BJ (cell line): ENCODE measurements at regions of chr10 and their contacts with region 1.

Region 1: GRCh38 chr10:44071479-44071878 is 313.4 kb downstream of the CXCL12 start:
- DNase-seq: peak; percentile 89
- H3K4me3 ChIP-seq: no peak overlapping the region
- H3K27me3 ChIP-seq: no peaks in the 10 kb centered on the region
- CTCF ChIP-seq: peak; percentile 39

Region 2: GRCh38 chr10:44089671-44090070 is 18.2 kb after region 1 on chr10:
- CTCF ChIA-PET with region 1: no interaction called
- POLR2A ChIA-PET with region 1: no interaction called
- DNase-seq: no peak
- H3K4me3 ChIP-seq: no peak overlapping the region
- H3K27me3 ChIP-seq: no peaks in the 10 kb centered on the region
- CTCF ChIP-seq: no peak

Region 3: DNA sequence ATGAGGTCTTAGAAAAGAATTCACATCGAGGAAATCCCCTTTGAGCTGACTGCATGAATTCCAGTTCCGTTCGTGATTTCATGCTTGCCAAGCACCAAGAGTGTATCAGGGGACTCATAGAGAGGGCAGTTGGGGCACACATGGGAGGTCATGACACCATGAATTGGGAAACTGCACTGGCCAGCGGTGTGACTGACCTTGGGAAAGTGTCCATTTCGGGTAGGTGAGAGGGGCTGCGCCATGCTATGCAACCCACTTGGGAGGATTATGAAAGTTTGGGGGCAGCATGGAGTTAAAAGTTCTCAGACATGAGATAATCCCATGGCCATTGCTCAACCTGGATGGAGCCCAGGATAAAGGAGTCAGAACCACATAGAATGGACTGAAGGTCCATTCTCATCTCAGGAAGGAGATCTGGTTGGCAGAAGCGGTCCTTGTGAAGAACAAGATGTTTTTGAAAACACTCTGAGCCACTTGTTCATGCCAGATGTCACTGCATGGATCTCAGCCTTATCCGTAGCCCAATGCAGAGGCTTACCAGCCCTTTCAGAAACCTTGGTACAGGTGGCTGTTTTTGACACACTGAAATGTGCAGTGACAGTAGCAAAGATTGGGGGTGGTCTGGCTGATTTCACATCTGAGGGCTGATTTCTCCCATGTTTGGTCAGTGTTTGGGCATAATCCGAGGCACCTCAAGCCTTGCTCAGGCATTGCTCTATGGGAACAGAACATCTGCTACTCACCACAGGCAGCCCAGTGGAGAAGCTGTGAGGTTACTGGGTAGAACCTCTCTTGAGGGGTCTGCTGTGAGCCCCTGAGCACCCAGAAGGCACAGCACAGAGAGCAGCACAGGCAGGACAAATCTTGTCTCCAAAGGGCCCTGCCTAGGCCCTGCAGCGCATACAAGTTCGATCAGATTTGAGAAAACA is 61.1 kb after region 1 on chr10:
- CTCF ChIA-PET with region 1: no interaction called
- POLR2A ChIA-PET with region 1: no interaction called
- DNase-seq: no peak
- H3K4me3 ChIP-seq: no peak overlapping the region
- H3K27me3 ChIP-seq: peaks cover 3% of the 10 kb centered on the region; the same call in 1 of the 2 replicates
- CTCF ChIP-seq: no peak

Region 4: GRCh38 chr10:44300666-44301649 is 229.5 kb after region 1 on chr10:
- CTCF ChIA-PET with region 1: no interaction called
- POLR2A ChIA-PET with region 1: interaction called, 25 read pairs
- DNase-seq: peak; percentile 96
- H3K4me3 ChIP-seq: no peak overlapping the region
- H3K27me3 ChIP-seq: no peaks in the 10 kb centered on the region
- CTCF ChIP-seq: no peak

Region 5: DNA sequence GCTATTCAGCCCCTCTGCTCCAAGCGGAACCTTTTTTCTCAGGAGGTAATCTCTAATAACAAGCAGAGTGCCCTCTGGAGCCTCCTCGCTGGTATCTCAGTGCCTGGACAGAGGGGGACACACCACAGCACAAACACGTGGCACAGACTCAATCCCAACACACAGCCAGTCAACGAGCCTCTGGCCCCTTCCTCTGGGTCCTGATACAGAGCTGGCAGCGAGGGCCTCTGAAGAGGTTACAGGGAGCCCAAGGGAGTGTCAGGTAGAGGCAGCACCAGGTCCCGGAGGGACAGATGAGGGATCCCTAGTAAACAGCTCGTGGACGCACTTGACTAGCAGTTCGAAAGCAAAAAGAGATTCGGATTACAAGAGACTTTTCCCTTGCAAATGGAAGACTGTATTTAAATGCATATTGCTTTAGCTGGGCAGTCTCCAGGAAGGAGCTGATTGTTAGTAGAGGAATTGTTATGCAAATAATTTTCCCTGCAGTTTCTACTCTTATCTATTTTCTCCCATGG is 299.3 kb after region 1 on chr10:
- CTCF ChIA-PET with region 1: no interaction called
- POLR2A ChIA-PET with region 1: interaction called, 18 read pairs
- DNase-seq: no peak
- H3K4me3 ChIP-seq: no peak overlapping the region
- H3K27me3 ChIP-seq: no peaks in the 10 kb centered on the region
- CTCF ChIP-seq: no peak